SK-N-SH (cell line): ENCODE measurements at regions of chr2 and their contacts with region 1.

Region 1: GRCh38 chr2:219119422-219120043 is 41.1 kb downstream of the NHEJ1 start:
- DNase-seq: peak; percentile 77
- H3K4me3 ChIP-seq: no peak overlapping the region; a peak in 1 of 4 replicates
- H3K27ac ChIP-seq: no peak overlapping the region
- H3K4me1 ChIP-seq: no peaks in the 10 kb centered on the region; a peak in 2 of 4 replicates
- H3K27me3 ChIP-seq: no peaks in the 10 kb centered on the region
- CTCF ChIP-seq: peak; percentile 82
- EP300 ChIP-seq: no peak
- RAD21 ChIP-seq: peak; percentile 86

Region 2: GRCh38 chr2:218582076-218582475 is 537.5 kb before region 1 on chr2:
- CTCF ChIA-PET with region 1: no interaction called
- POLR2A ChIA-PET with region 1: no interaction called
- DNase-seq: no peak
- H3K4me3 ChIP-seq: no peak overlapping the region
- H3K27ac ChIP-seq: peak overlapping the region in 1 of 2 experiments; percentile 56; a peak in 2 of 4 replicates
- H3K4me1 ChIP-seq: peaks cover 5 to 6% of the 10 kb centered on the region in 2 experiments; a peak in 2 of 4 replicates
- H3K27me3 ChIP-seq: no peaks in the 10 kb centered on the region
- CTCF ChIP-seq: no peak
- EP300 ChIP-seq: no peak
- RAD21 ChIP-seq: no peak

Region 3: GRCh38 chr2:218852911-218853667 is 266.4 kb before region 1 on chr2:
- CTCF ChIA-PET with region 1: interaction called, 10 read pairs
- POLR2A ChIA-PET with region 1: no interaction called
- DNase-seq: peak; percentile 74
- H3K4me3 ChIP-seq: no peak overlapping the region; a peak in 1 of 4 replicates
- H3K27ac ChIP-seq: no peak overlapping the region
- H3K4me1 ChIP-seq: peaks cover 3 to 43% of the 10 kb centered on the region in 2 experiments; a peak in 2 of 4 replicates
- H3K27me3 ChIP-seq: peaks cover 9% of the 10 kb centered on the region; the same call in 1 of the 2 replicates
- CTCF ChIP-seq: peak; percentile 81
- EP300 ChIP-seq: no peak
- RAD21 ChIP-seq: peak; percentile 95

Region 4: DNA sequence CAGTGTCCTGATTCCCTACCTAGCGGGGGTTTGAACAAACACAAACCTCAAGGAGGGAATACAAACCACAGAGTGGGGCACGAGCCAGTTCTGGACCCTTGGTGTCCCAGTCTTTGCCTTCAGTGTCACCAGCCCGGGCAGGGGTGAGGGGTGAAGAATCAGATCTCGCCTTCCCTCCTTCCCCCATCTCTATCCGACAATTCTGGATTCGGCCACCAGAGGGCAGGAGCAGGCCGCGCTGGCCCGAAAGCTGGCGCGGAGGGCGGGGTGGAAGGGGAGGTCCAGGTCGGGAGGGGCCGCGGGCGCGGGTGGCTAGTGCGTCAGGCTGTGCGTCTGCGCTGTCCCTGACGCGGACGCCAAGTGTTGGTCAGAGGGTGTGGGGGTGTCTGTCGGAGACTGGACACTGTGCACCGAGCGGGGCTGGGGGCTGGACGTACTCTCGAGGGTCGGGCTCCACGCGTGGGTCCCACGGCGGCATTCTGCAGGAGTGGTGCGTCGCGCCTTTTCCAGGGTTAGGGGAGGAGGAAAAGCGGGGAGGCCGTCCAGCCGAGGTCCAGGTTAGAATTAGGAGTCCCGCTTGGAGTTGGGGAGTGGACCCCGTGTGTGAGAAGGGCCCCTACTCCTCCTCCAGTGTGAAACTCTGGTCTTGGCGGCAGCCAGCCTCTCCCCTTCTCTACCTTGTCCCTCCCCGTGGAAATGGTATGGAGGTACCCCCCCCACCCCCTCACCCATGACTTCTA is 123.4 kb before region 1 on chr2:
- CTCF ChIA-PET with region 1: interaction called, 111 read pairs
- POLR2A ChIA-PET with region 1: no interaction called
- DNase-seq: peak; percentile 96
- H3K4me3 ChIP-seq: peak overlapping the region; percentile 57 to 61
- H3K27ac ChIP-seq: peak overlapping the region in 1 of 2 experiments; percentile 99; a peak in 2 of 4 replicates
- H3K4me1 ChIP-seq: peaks cover 0 to 61% of the 10 kb centered on the region in 2 experiments; a peak in 2 of 4 replicates
- H3K27me3 ChIP-seq: no peaks in the 10 kb centered on the region
- CTCF ChIP-seq: peak; percentile 85
- EP300 ChIP-seq: 0 out of 4 replicates have a peak, but pooled peaks of 1 of the 2 experiments have one; percentile 24
- RAD21 ChIP-seq: peak; percentile 96

Region 5: GRCh38 chr2:219029829-219030165 is 89.7 kb before region 1 on chr2:
- CTCF ChIA-PET with region 1: interaction called, 238 read pairs
- POLR2A ChIA-PET with region 1: interaction called, 3 read pairs
- DNase-seq: peak; percentile 93
- H3K4me3 ChIP-seq: peak overlapping the region in 1 of 2 experiments; percentile 49; a peak in 1 of 4 replicates
- H3K27ac ChIP-seq: no peak overlapping the region; a peak in 1 of 4 replicates
- H3K4me1 ChIP-seq: peaks cover 0 to 5% of the 10 kb centered on the region in 2 experiments; a peak in 1 of 4 replicates
- H3K27me3 ChIP-seq: peaks cover 18% of the 10 kb centered on the region; the same call in 1 of the 2 replicates
- CTCF ChIP-seq: peak; percentile 84
- EP300 ChIP-seq: no peak
- RAD21 ChIP-seq: peak; percentile 91

Region 6: GRCh38 chr2:219057709-219058540 is 61.6 kb before region 1 on chr2:
- CTCF ChIA-PET with region 1: interaction called, 177 read pairs
- POLR2A ChIA-PET with region 1: no interaction called
- DNase-seq: peak; percentile 86
- H3K4me3 ChIP-seq: peak overlapping the region in 1 of 2 experiments; percentile 35; a peak in 1 of 4 replicates
- H3K27ac ChIP-seq: no peak overlapping the region
- H3K4me1 ChIP-seq: peaks cover 0 to 16% of the 10 kb centered on the region in 2 experiments; a peak in 1 of 4 replicates
- H3K27me3 ChIP-seq: peaks cover 43% of the 10 kb centered on the region
- CTCF ChIP-seq: peak; percentile 78
- EP300 ChIP-seq: no peak
- RAD21 ChIP-seq: peak; percentile 77

Region 7: DNA sequence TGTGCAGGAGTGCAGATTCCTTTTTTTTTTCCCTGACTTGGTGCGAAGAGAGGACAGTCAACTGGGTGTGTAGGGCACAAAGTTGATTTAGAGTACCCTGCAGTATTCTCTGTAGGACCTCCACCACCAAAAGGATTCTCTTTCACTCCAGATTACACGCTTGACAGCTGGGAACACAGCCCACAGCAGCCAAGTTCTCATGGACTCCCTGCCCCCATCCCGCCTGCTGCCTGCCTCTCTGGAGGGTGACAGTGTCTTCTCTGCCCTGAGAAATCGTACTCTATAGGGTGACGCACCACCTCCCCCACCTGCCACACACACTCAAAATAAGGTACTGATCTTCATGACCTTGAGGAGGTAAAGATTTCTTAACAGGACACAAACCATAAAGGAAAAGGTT is 32.2 kb before region 1 on chr2:
- CTCF ChIA-PET with region 1: interaction called, 39 read pairs
- POLR2A ChIA-PET with region 1: no interaction called
- DNase-seq: no peak
- H3K4me3 ChIP-seq: no peak overlapping the region
- H3K27ac ChIP-seq: no peak overlapping the region
- H3K4me1 ChIP-seq: no peaks in the 10 kb centered on the region
- H3K27me3 ChIP-seq: no peaks in the 10 kb centered on the region
- CTCF ChIP-seq: no peak
- EP300 ChIP-seq: no peak
- RAD21 ChIP-seq: no peak

Region 8: DNA sequence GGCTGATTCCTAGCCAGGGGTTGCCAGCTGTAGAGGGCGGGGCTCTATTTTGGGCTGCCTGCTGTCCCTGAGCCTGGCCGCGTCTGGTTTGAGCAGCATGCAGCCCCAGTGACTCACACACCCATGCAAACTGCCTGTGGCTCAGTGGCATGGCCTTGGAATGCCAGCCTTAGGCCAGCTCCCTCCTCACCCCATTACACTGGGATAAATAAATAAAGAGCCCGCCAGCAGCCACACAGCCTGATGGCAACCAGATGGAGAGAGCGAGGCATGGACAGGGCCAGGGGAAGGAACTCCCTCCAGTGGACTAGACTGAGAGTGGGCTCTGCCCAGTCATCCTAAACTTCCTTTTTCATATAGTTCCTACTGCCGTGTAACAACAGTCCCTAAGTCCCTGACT is 22.8 kb after region 1 on chr2:
- CTCF ChIA-PET with region 1: interaction called, 23 read pairs
- POLR2A ChIA-PET with region 1: no interaction called
- DNase-seq: peak; percentile 48
- H3K4me3 ChIP-seq: no peak overlapping the region
- H3K27ac ChIP-seq: peak overlapping the region in 1 of 2 experiments; percentile 19; a peak in 2 of 4 replicates
- H3K4me1 ChIP-seq: peaks cover 8 to 10% of the 10 kb centered on the region in 2 experiments; a peak in 1 of 4 replicates
- H3K27me3 ChIP-seq: no peaks in the 10 kb centered on the region
- CTCF ChIP-seq: peak; percentile 38; the same call in 1 of the 2 replicates
- EP300 ChIP-seq: no peak
- RAD21 ChIP-seq: no peak

Region 9: GRCh38 chr2:219278655-219279516 is 159.4 kb after region 1 on chr2 and contains the start of gene DNAJB2:
- CTCF ChIA-PET with region 1: no interaction called
- POLR2A ChIA-PET with region 1: no interaction called
- DNase-seq: peak; percentile 99
- H3K4me3 ChIP-seq: peak within 1 kb of the TSS; percentile 69 to 82
- H3K27ac ChIP-seq: peak within 1 kb of the TSS; percentile 88 to 91
- H3K4me1 ChIP-seq: peaks cover 24 to 26% of the 10 kb centered on the region in 2 experiments
- H3K27me3 ChIP-seq: no peaks in the 10 kb centered on the region
- CTCF ChIP-seq: no peak
- EP300 ChIP-seq: peak; percentile 57 to 64; a peak in 3 of 4 replicates
- RAD21 ChIP-seq: no peak
- polyA plus RNA-seq, gene DNAJB2: 37.2 and 39.9 TPM in 2 replicates